ENCODE measurements at regions of chr17 and their contacts with region 1.

Region 1: DNA sequence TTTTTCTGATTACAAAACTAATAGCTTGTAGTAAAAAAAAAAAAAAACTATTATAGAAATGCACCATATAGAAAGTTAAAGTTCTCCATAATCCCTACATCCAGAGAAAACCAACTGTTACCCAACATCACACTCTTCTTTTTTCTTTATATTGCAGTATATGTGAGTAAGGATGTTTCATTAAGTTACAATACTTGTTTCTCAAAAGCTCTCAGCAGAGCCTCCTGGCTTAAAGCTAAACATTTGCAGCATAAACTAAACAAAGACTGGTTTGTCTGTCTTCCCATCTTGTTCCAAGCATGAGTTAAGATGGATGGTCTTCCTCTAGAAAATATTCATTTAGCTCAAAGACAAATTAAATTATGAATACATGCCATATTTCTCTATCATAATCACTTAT is 25.2 kb downstream of the GRB2 start:
- DNase-seq: no peak
- ATAC-seq: no peak
- H3K4me3 Mint-ChIP-seq: no peak overlapping the region
- H3K27ac Mint-ChIP-seq: peak overlapping the region; percentile 65
- H3K4me1 Mint-ChIP-seq: peaks cover 47% of the 10 kb centered on the region
- H3K27me3 Mint-ChIP-seq: no peaks in the 10 kb centered on the region

Region 2: GRCh38 chr17:74024871-74025531 is 1355.3 kb before region 1 on chr17:
- CTCF ChIA-PET with region 1: no interaction called
- POLR2A ChIA-PET with region 1: no interaction called
- intact Hi-C with region 1: no loop called
- DNase-seq: no peak
- ATAC-seq: no peak
- H3K4me3 Mint-ChIP-seq: no peak overlapping the region
- H3K27ac Mint-ChIP-seq: no peak overlapping the region
- H3K4me1 Mint-ChIP-seq: peaks cover under 1% of the 10 kb centered on the region
- H3K27me3 Mint-ChIP-seq: peaks cover 4% of the 10 kb centered on the region

Region 3: DNA sequence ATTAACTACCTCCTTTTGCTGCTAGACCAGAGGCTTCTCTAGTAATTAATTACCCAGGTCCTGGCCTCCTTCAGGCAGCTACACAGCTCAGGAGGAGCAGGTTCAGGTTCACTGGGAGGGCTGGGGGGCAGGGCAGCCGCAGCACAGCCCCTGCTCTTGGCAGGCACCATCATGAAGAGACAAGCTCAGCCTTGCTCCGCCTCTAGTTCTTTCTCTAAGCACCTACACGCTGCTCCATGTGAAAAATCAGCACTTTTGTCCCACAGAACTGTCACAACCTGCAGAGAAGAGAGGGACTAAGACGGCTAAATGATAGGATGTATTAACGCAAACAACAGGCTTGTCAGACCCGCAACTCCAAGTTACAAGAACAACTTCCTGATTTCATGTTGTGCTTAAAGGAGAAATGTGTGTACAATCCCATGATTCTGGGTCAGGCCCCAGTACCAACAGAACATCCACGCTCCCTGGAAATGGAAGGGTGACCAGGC is 28.2 kb before region 1 on chr17:
- CTCF ChIA-PET with region 1: interaction called, 3 read pairs
- POLR2A ChIA-PET with region 1: interaction called, 11 read pairs
- intact Hi-C with region 1: no loop called
- DNase-seq: no peak
- ATAC-seq: no peak
- H3K4me3 Mint-ChIP-seq: no peak overlapping the region
- H3K27ac Mint-ChIP-seq: no peak overlapping the region
- H3K4me1 Mint-ChIP-seq: peaks cover 75% of the 10 kb centered on the region
- H3K27me3 Mint-ChIP-seq: no peaks in the 10 kb centered on the region

Region 4: DNA sequence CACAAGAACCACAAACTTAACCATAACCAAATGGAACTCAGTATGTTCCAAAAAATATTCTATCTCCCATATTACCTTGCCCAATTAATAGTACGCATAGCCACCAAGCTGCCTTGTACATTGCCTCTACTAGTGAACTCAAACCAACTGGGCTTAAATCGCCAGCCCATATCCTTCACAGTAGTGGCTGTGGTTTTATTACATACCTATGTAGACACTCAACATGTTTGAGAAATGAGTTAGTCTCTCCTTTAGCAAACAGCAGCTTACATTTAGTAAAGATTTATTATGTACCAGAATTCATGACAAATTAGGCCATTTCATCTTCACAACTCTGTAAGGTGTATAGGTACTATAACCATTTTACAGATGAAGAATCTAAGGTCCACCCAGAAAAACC is 16.2 kb before region 1 on chr17:
- CTCF ChIA-PET with region 1: interaction called, 10 read pairs
- POLR2A ChIA-PET with region 1: no interaction called
- intact Hi-C with region 1: no loop called
- DNase-seq: no peak
- ATAC-seq: no peak
- H3K4me3 Mint-ChIP-seq: no peak overlapping the region
- H3K27ac Mint-ChIP-seq: peak overlapping the region; percentile 83
- H3K4me1 Mint-ChIP-seq: peaks cover 94% of the 10 kb centered on the region
- H3K27me3 Mint-ChIP-seq: no peaks in the 10 kb centered on the region

Region 5: DNA sequence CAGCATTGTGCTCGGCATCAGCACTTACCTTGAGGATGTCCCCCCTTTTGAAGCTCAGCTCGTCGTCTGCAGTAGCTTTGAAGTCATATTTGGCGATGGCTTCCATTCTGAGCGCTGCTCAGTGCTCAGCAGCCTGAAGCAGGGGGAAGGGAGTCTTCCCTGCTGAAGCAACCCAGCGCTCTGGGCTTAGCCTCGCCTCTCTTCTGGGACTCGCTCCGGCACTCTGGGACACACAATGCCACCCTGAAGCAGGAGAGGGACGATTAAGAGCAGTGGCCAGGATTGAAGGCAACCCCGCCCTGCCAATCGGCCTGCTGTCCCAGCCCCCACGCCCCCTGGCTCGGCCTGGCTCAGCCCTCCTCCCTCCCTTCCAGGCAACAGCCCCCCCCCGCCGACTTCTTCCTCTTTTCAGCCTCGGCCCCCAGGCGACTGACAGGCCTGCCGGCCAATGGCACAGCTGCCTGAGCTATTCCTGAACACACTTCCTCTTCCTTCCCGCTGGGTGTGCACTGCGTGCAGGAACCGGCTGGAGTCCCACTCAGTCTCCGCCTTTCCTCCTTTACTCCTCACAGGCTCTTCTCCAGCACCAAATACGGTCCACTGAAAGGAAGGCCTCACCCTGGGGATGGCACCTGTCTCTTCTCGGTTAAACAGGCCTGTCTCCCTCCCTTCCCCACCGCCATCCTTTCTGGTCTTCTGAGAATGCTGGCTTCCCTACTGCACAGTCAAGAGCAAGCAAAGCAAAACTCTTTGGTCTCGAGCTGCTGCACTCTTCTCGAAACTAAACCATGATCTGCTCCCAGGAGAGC is 13.4 kb after region 1 on chr17:
- CTCF ChIA-PET with region 1: interaction called, 10 read pairs
- POLR2A ChIA-PET with region 1: interaction called, 6 read pairs
- intact Hi-C with region 1: loop called in 1 of 2 experiments (anchors 2 kb)
- DNase-seq: peak; percentile 91
- ATAC-seq: peak; percentile 91
- H3K4me3 Mint-ChIP-seq: peak overlapping the region; percentile 91
- H3K27ac Mint-ChIP-seq: peak overlapping the region; percentile 71
- H3K4me1 Mint-ChIP-seq: peaks cover 75% of the 10 kb centered on the region
- H3K27me3 Mint-ChIP-seq: no peaks in the 10 kb centered on the region

Measured in activated CD4-positive, alpha-beta T cell treated with anti-CD3 and anti-CD28 coated beads for 36 hours (primary cell).